Brain microvascular endothelial cell (primary cell): ENCODE measurements at regions of chr6 and their contacts with region 1.

Region 1: GRCh38 chr6:131683479-131683878 is 17.7 kb downstream of the OR2A4 start:
- DNase-seq: no peak
- H3K4me3 ChIP-seq: no peak overlapping the region
- H3K27ac ChIP-seq: no peak overlapping the region
- H3K27me3 ChIP-seq: no peaks in the 10 kb centered on the region
- CTCF ChIP-seq: no peak

Region 2: GRCh38 chr6:131787766-131788712 is 104.6 kb after region 1 on chr6:
- in situ Hi-C with region 1: no loop called
- DNase-seq: peak; percentile 39
- H3K4me3 ChIP-seq: no peak overlapping the region
- H3K27ac ChIP-seq: no peak overlapping the region
- H3K27me3 ChIP-seq: no peaks in the 10 kb centered on the region
- CTCF ChIP-seq: peak; percentile 66

Region 3: GRCh38 chr6:131894735-131895424 is 211.4 kb after region 1 on chr6:
- in situ Hi-C with region 1: loop called (anchors 10 kb)
- DNase-seq: no peak
- H3K4me3 ChIP-seq: no peak overlapping the region
- H3K27ac ChIP-seq: no peak overlapping the region
- H3K27me3 ChIP-seq: no peaks in the 10 kb centered on the region
- CTCF ChIP-seq: no peak

Region 4: GRCh38 chr6:131979515-131980337 is 296.2 kb after region 1 on chr6:
- in situ Hi-C with region 1: no loop called
- DNase-seq: peak; percentile 96
- H3K4me3 ChIP-seq: no peak overlapping the region
- H3K27ac ChIP-seq: peak overlapping the region; percentile 86
- H3K27me3 ChIP-seq: no peaks in the 10 kb centered on the region
- CTCF ChIP-seq: no peak